Activated CD4-positive, alpha-beta T cell treated with anti-CD3 and anti-CD28 coated beads for 36 hours (primary cell): ENCODE measurements at regions of chr12 and their contacts with region 1.

Region 1: GRCh38 chr12:32139064-32139421 is 32.4 kb downstream of the BICD1 start:
- DNase-seq: peak; percentile 73
- ATAC-seq: peak; percentile 64
- H3K4me3 Mint-ChIP-seq: peak overlapping the region; percentile 66
- H3K27ac Mint-ChIP-seq: peak overlapping the region; percentile 28
- H3K4me1 Mint-ChIP-seq: peaks cover 28% of the 10 kb centered on the region
- H3K27me3 Mint-ChIP-seq: peaks cover 11% of the 10 kb centered on the region

Region 2: DNA sequence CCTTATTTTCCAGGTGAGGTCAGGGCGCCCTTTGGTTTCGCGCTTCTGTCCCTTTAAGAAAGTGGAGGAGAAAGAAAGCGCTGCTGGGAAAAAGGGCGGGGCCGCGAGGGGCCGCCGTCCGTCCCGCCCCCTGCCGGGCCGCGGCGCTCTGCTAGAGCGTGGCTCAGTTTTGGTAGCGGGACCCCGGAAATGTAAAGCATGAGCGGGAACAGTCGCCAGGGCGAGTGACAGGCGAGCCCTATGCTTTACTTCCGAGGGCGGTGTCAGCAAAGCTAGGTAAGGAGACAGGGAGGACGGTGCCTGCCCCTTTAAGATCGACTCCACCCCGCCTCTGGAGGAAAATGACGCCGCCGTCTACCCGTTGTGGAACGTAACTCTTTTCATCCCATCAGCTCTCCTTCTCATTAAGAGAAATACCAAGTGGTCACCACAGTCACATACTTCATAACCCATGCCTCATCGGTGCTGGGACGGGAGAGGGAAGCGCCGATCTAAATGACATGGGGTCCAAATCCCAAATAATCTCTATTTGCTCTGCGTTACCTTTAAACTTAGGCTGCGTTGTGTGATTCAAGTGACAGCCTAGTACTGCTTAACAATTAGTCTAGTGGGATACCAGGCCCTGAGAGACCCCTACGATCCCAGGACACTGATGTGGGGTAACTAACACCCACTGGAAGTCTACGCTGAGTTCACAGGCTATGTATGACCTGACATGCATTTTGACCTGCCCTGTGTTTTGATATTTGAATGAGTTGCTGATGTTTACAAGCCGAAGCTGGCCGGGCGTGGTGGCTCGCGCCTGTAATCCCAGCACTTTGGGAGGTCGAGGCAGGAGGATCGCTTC is 479.7 kb before region 1 on chr12 and contains the start of gene ETFBKMT:
- CTCF ChIA-PET with region 1: interaction called, 6 read pairs
- POLR2A ChIA-PET with region 1: no interaction called
- intact Hi-C with region 1: loop called (anchors 1 to 10 kb)
- DNase-seq: peak; percentile 96
- ATAC-seq: peak; percentile 99
- H3K4me3 Mint-ChIP-seq: peak within 1 kb of the TSS; percentile 87
- H3K27ac Mint-ChIP-seq: peak within 1 kb of the TSS; percentile 100
- H3K4me1 Mint-ChIP-seq: peaks cover 13% of the 10 kb centered on the region
- H3K27me3 Mint-ChIP-seq: no peaks in the 10 kb centered on the region
- total RNA-seq, gene ETFBKMT: 0.35 to 1.4 TPM

Region 3: GRCh38 chr12:32062881-32063280 is 76.2 kb before region 1 on chr12:
- CTCF ChIA-PET with region 1: no interaction called
- POLR2A ChIA-PET with region 1: no interaction called
- intact Hi-C with region 1: loop called (anchors 1 to 5 kb)
- DNase-seq: no peak
- ATAC-seq: no peak
- H3K4me3 Mint-ChIP-seq: no peak overlapping the region
- H3K27ac Mint-ChIP-seq: no peak overlapping the region
- H3K4me1 Mint-ChIP-seq: peaks cover 10% of the 10 kb centered on the region
- H3K27me3 Mint-ChIP-seq: no peaks in the 10 kb centered on the region

Region 4: DNA sequence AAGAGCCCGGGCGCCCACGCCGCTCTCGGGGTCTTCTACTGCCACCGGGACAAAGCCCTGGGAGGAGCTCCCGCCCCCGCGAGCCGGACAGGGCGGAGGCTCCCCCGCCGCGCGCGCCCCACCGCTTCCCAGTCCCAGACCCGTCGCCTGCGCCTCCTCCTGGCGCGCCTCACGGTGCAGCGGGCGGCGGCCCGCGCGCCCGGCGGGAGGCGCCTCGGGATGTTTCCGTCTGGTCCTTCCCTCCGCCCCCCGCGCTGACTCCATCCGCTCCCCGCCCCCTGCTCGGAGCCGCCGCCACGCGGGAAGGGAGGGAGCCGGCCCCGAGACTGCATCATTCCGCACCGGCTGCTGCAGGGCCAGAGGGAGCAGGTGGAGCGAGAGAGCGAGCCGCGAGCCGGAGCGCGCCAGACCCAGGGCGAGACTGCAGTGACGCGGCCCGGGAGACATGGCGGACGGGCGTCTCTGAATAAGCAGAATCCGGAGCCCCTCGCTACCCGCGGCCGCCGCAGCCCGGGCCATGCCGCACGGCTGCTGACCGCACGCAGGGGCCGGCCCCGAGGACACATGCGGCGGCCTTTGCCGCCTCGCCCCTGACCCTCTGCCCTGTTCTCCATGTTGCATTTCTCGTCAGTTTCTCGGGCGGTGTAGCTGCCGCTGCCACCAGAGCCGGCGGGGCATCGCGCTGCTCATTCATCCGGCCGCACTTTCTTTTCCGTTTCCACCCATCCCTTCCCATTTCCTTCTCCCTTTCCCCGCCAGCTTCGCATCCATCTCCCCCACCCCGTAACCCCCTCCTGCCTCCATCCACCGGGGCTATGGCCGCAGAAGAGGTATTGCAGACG is 32.3 kb before region 1 on chr12 and contains the start of gene BICD1:
- CTCF ChIA-PET with region 1: no interaction called
- POLR2A ChIA-PET with region 1: interaction called, 3 read pairs
- intact Hi-C with region 1: loop called (anchors 1 to 2 kb)
- DNase-seq: peak; percentile 86
- ATAC-seq: peak; percentile 83
- H3K4me3 Mint-ChIP-seq: peak within 1 kb of the TSS; percentile 83
- H3K27ac Mint-ChIP-seq: peak within 1 kb of the TSS; percentile 92
- H3K4me1 Mint-ChIP-seq: peaks cover 20% of the 10 kb centered on the region
- H3K27me3 Mint-ChIP-seq: peaks cover 2% of the 10 kb centered on the region
- total RNA-seq, gene BICD1: 12.7 to 15.1 TPM

Region 5: GRCh38 chr12:32197421-32197820 is 58.4 kb after region 1 on chr12:
- CTCF ChIA-PET with region 1: no interaction called
- POLR2A ChIA-PET with region 1: interaction called, 9 read pairs
- intact Hi-C with region 1: loop called in 1 of 2 experiments (anchors 2 kb)
- DNase-seq: no peak
- ATAC-seq: no peak
- H3K4me3 Mint-ChIP-seq: no peak overlapping the region
- H3K27ac Mint-ChIP-seq: no peak overlapping the region
- H3K4me1 Mint-ChIP-seq: peaks cover 12% of the 10 kb centered on the region
- H3K27me3 Mint-ChIP-seq: no peaks in the 10 kb centered on the region

Region 6: GRCh38 chr12:32257695-32258496 is 118.9 kb after region 1 on chr12:
- CTCF ChIA-PET with region 1: interaction called, 6 read pairs
- POLR2A ChIA-PET with region 1: no interaction called
- intact Hi-C with region 1: loop called (anchors 1 kb)
- DNase-seq: no peak
- ATAC-seq: peak; percentile 81
- H3K4me3 Mint-ChIP-seq: no peak overlapping the region
- H3K27ac Mint-ChIP-seq: peak overlapping the region; percentile 66
- H3K4me1 Mint-ChIP-seq: peaks cover 15% of the 10 kb centered on the region
- H3K27me3 Mint-ChIP-seq: no peaks in the 10 kb centered on the region

Region 7: GRCh38 chr12:32302218-32303173 is 163.5 kb after region 1 on chr12:
- CTCF ChIA-PET with region 1: interaction called, 7 read pairs
- POLR2A ChIA-PET with region 1: interaction called, 11 read pairs
- intact Hi-C with region 1: no loop called
- DNase-seq: peak; percentile 37
- ATAC-seq: peak; percentile 66
- H3K4me3 Mint-ChIP-seq: no peak overlapping the region
- H3K27ac Mint-ChIP-seq: no peak overlapping the region
- H3K4me1 Mint-ChIP-seq: no peaks in the 10 kb centered on the region
- H3K27me3 Mint-ChIP-seq: no peaks in the 10 kb centered on the region